CD8-positive, alpha-beta T cell (primary cell): ENCODE measurements at regions of chr1 and their contacts with region 1.

Region 1: DNA sequence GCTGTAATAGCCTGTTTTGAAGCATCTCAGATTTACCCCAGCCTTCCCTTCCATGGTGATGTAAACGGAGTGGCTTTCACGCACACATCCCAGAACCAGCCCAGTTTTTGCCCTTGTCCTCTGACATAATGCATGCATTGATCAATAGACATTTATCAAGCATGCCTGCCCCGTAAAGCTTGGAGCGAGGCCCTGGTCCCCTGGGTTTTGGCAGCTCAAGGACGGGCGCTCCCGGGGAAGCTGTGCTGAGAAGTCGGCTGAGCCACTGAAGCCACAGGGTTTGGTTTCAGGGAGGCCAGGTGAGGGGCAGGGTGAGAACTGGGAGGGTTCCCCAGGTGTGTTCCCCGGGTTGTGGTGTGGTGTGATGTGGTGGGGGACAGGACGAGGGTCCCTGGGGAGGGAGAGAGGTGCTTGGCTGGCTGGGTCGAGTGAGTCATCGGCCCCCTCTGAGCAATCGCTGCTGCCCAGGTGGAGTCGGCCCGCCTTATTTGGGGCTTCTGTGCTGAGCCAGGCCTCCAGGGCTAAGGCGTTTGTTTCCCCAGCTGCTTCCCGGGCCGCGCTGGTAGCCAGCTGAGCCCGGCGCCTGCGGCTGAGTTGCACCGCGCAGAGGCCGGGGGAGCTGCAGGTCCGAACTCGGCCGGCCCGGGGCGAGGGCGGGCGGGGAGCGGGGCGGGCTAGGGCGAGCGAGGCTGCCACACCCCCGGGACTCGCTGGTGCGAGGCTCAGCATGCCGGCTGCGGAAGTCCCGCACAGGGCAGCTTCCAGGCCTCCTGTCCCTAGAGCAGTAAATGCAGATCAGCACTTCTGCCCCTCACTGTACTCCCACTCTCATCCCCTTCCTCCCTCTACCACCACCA is 23.6 kb downstream of the ATP2B4 start:
- DNase-seq: peak; percentile 35 to 86 (median 81)
- ATAC-seq: peak; percentile 69
- H3K4me3 ChIP-seq: peak overlapping the region; percentile 37
- H3K4me3 Mint-ChIP-seq: peak overlapping the region; percentile 79
- H3K27ac ChIP-seq: peak overlapping the region; percentile 12 to 77
- H3K27ac Mint-ChIP-seq: peak overlapping the region; percentile 94
- H3K4me1 ChIP-seq: peaks cover 53% of the 10 kb centered on the region
- H3K4me1 Mint-ChIP-seq: peaks cover 63% of the 10 kb centered on the region
- H3K27me3 ChIP-seq: no peaks in the 10 kb centered on the region
- H3K27me3 Mint-ChIP-seq: no peaks in the 10 kb centered on the region
- CTCF ChIP-seq: no peak

Region 2: GRCh38 chr1:203607533-203607873 is 42.7 kb before region 1 on chr1:
- CTCF ChIA-PET with region 1: no interaction called
- POLR2A ChIA-PET with region 1: interaction called, 3 read pairs
- intact Hi-C with region 1: loop called (anchors 1 kb)
- DNase-seq: no peak
- ATAC-seq: no peak
- H3K4me3 ChIP-seq: no peak overlapping the region
- H3K4me3 Mint-ChIP-seq: no peak overlapping the region
- H3K27ac ChIP-seq: peak overlapping the region in 1 of 2 experiments; percentile 61
- H3K27ac Mint-ChIP-seq: peak overlapping the region; percentile 93
- H3K4me1 ChIP-seq: peaks cover 20% of the 10 kb centered on the region
- H3K4me1 Mint-ChIP-seq: peaks cover 48% of the 10 kb centered on the region
- H3K27me3 ChIP-seq: no peaks in the 10 kb centered on the region
- H3K27me3 Mint-ChIP-seq: no peaks in the 10 kb centered on the region
- CTCF ChIP-seq: no peak

Region 3: GRCh38 chr1:203673550-203674427 is 23.6 kb after region 1 on chr1:
- CTCF ChIA-PET with region 1: interaction called, 13 read pairs
- POLR2A ChIA-PET with region 1: interaction called, 11 read pairs
- intact Hi-C with region 1: loop called (anchors 1 to 2 kb)
- DNase-seq: peak; percentile 43 to 94 (median 70)
- ATAC-seq: peak; percentile 88
- H3K4me3 ChIP-seq: no peak overlapping the region
- H3K4me3 Mint-ChIP-seq: peak overlapping the region; percentile 56
- H3K27ac ChIP-seq: peak overlapping the region; percentile 11 to 78
- H3K27ac Mint-ChIP-seq: peak overlapping the region; percentile 98
- H3K4me1 ChIP-seq: peaks cover 48% of the 10 kb centered on the region
- H3K4me1 Mint-ChIP-seq: peaks cover 66% of the 10 kb centered on the region
- H3K27me3 ChIP-seq: no peaks in the 10 kb centered on the region
- H3K27me3 Mint-ChIP-seq: no peaks in the 10 kb centered on the region
- CTCF ChIP-seq: peak; percentile 41